ENCODE measurements at regions of chr13 and their contacts with region 1.

Region 1: GRCh38 chr13:36346222-36347083 is at the start of gene SPART:
- DNase-seq: peak; percentile 83
- H3K4me3 ChIP-seq: peak within 1 kb of the TSS; percentile 92 to 93 (median 92)
- H3K27ac ChIP-seq: peak within 1 kb of the TSS; percentile 96
- H3K4me1 ChIP-seq: peaks cover 26% of the 10 kb centered on the region
- H3K27me3 ChIP-seq: no peaks in the 10 kb centered on the region
- CTCF ChIP-seq: peak; percentile 98 to 99
- total RNA-seq, gene SPART: 53.5 to 56.0 TPM

Region 2: GRCh38 chr13:36282818-36283445 is 63.5 kb before region 1 on chr13:
- CTCF ChIA-PET with region 1: no interaction called
- dilution Hi-C with region 1: no loop called
- in situ Hi-C with region 1: no loop called
- intact Hi-C with region 1: loop called (anchors 1 kb)
- DNase-seq: peak; percentile 24
- H3K4me3 ChIP-seq: no peak overlapping the region
- H3K27ac ChIP-seq: no peak overlapping the region
- H3K4me1 ChIP-seq: no peaks in the 10 kb centered on the region
- H3K27me3 ChIP-seq: no peaks in the 10 kb centered on the region
- CTCF ChIP-seq: peak; percentile 81 to 90

Region 3: DNA sequence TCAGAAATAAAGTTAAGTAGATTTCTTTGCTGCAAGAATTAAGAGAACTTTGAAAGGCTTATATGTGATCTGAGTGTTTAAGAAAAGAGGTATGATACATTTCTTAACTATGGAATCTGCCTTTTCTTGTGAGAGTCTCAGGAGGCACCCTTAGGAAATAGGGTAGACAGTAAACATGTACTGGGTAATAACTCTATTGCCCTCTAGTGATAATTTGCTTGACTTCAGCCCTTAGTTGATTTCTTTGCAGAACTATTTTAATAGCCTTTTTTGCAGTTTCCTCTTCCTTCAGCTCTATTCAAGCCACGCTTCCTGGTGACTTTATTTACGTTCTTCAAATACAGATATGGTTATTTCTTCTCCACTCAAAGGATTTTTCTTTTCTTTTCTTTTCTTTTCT is 48.8 kb after region 1 on chr13:
- CTCF ChIA-PET with region 1: interaction called, 26 read pairs
- dilution Hi-C with region 1: no loop called
- in situ Hi-C with region 1: no loop called
- intact Hi-C with region 1: loop called (anchors 1 kb)
- DNase-seq: peak; percentile 20
- H3K4me3 ChIP-seq: no peak overlapping the region
- H3K27ac ChIP-seq: no peak overlapping the region
- H3K4me1 ChIP-seq: no peaks in the 10 kb centered on the region
- H3K27me3 ChIP-seq: no peaks in the 10 kb centered on the region
- CTCF ChIP-seq: peak; percentile 40 to 54

Region 4: GRCh38 chr13:36453516-36453915 is 107.1 kb after region 1 on chr13:
- CTCF ChIA-PET with region 1: no interaction called
- dilution Hi-C with region 1: loop called (anchors 5 kb)
- in situ Hi-C with region 1: no loop called
- intact Hi-C with region 1: no loop called
- DNase-seq: no peak
- H3K4me3 ChIP-seq: no peak overlapping the region
- H3K27ac ChIP-seq: no peak overlapping the region
- H3K4me1 ChIP-seq: peaks cover 11% of the 10 kb centered on the region
- H3K27me3 ChIP-seq: no peaks in the 10 kb centered on the region
- CTCF ChIP-seq: peak; percentile 14 to 48

Region 5: DNA sequence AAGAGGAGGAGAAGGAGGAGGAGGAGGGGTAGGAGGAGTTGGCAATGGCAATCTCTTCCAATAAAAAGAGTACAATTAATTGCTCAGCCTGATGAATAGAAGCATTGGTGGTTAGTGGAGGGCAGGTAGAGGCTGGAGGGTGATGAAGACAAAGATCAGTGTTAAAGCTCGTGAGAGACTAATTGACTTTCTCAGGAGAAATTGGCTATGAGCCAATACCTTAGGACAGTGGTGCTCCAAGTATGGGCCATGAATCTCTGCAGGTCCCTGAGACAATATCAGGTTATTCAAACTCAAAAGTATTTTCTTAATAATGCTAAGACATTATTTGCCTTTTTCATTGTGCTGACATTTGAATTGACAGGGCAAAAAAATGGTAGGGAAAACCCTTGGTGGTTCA is 303.6 kb after region 1 on chr13:
- CTCF ChIA-PET with region 1: no interaction called
- dilution Hi-C with region 1: no loop called
- in situ Hi-C with region 1: no loop called
- intact Hi-C with region 1: no loop called
- DNase-seq: no peak
- H3K4me3 ChIP-seq: no peak overlapping the region
- H3K27ac ChIP-seq: no peak overlapping the region
- H3K4me1 ChIP-seq: no peaks in the 10 kb centered on the region
- H3K27me3 ChIP-seq: no peaks in the 10 kb centered on the region
- CTCF ChIP-seq: no peak

Region 6: DNA sequence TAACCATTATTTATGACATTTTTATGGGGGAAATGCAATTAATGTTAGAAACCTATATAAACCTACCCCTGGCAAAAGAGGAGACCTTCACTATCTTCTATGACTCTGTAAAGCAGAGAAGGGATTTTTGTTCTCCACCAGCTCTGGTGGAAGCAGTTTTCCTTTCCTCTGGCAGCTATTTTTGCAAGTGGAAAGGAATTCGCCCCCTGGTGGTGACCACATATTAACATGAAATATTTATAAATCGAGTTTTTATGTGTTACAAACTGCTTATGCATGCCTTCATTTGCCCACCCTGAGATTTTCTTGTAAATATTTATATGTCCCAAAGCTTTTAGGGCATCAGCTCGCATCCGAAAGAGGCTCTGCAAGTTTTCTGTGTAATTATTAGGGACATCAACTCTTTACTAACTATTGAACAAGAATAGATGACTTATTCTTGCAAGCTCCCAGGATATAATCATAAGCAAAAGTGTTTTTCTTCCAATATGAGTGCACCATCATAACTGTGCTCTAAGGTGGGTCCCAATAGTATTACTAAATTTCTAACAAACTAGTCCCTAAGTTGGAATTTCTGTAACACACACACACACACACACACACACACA is 389.8 kb after region 1 on chr13:
- CTCF ChIA-PET with region 1: no interaction called
- dilution Hi-C with region 1: no loop called
- in situ Hi-C with region 1: no loop called
- intact Hi-C with region 1: loop called (anchors 1 kb)
- DNase-seq: peak; percentile 16
- H3K4me3 ChIP-seq: no peak overlapping the region
- H3K27ac ChIP-seq: no peak overlapping the region
- H3K4me1 ChIP-seq: no peaks in the 10 kb centered on the region
- H3K27me3 ChIP-seq: no peaks in the 10 kb centered on the region
- CTCF ChIP-seq: peak; percentile 48 to 65

Region 7: DNA sequence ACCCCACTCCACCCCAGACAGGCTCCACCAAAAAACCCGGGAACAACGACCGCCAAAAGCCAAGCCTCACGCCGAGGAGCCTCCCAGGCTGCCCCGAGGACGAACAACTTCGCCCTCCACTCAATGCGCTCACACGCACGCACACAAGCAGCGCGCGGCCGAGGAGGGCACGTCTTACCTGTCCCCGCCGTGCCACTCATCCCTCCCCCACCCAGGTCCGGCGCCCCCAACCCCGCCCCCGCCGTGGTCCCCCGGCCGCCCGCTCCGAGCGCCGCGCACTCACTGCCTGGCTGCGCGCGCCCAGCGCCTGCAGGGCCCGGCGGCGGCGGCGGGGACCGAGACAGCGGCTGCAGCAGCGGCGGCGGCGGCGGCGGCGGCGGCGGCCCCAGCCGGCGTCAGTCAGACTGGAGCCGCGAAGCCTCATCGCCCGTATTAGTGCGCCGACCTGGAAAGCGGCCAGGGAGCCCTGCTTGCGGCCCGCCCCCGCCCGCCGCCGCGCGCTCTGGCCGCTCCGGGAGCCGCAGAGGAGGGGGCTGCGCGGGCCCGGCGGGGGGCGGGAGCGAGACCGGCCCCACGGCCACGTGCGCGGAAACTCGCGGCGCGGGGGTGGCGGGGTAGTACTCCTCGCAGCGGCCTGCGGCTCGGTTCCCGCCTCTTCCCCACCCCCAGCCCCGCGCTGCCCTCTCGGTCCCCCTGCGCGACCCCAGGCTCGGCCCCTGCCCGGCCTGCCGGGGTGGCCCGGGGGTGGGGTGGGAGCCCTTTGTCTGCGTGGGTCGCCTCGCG is 573.6 kb after region 1 on chr13 and contains the start of gene SMAD9:
- CTCF ChIA-PET with region 1: no interaction called
- dilution Hi-C with region 1: no loop called
- in situ Hi-C with region 1: no loop called
- intact Hi-C with region 1: no loop called
- DNase-seq: peak; percentile 30
- H3K4me3 ChIP-seq: peak within 1 kb of the TSS; percentile 54 to 60 (median 57)
- H3K27ac ChIP-seq: no peak within 1 kb of the TSS
- H3K4me1 ChIP-seq: peaks cover 7% of the 10 kb centered on the region
- H3K27me3 ChIP-seq: peaks cover 5% of the 10 kb centered on the region
- CTCF ChIP-seq: no peak
- total RNA-seq, gene SMAD9: 1.0 to 1.2 TPM

Region 8: GRCh38 chr13:36999054-36999714 is 652.7 kb after region 1 on chr13 and contains the start of gene ALG5:
- CTCF ChIA-PET with region 1: no interaction called
- dilution Hi-C with region 1: no loop called
- in situ Hi-C with region 1: loop called (anchors 25 kb)
- intact Hi-C with region 1: no loop called
- DNase-seq: peak; percentile 83
- H3K4me3 ChIP-seq: peak within 1 kb of the TSS; percentile 76 to 93 (median 90)
- H3K27ac ChIP-seq: peak within 1 kb of the TSS; percentile 97
- H3K4me1 ChIP-seq: peaks cover 7% of the 10 kb centered on the region
- H3K27me3 ChIP-seq: no peaks in the 10 kb centered on the region
- CTCF ChIP-seq: peak; percentile 70 to 82
- total RNA-seq, gene ALG5: 27.7 to 37.5 TPM

Region 9: GRCh38 chr13:37326334-37326733 is 979.9 kb after region 1 on chr13:
- CTCF ChIA-PET with region 1: no interaction called
- dilution Hi-C with region 1: no loop called
- in situ Hi-C with region 1: no loop called
- intact Hi-C with region 1: no loop called
- DNase-seq: no peak
- H3K4me3 ChIP-seq: no peak overlapping the region
- H3K27ac ChIP-seq: no peak overlapping the region
- H3K4me1 ChIP-seq: no peaks in the 10 kb centered on the region
- H3K27me3 ChIP-seq: no peaks in the 10 kb centered on the region
- CTCF ChIP-seq: no peak

Measured in mammary epithelial cell (primary cell).